Activated CD4-positive, alpha-beta T cell treated with anti-CD3 and anti-CD28 coated beads, Interleukin-2, amount 10 ng/mL, durations not matched to agents 24 days and 14 days (primary cell): ENCODE measurements at regions of chrX and their contacts with region 1.

Region 1: GRCh38 chrX:12955882-12956703 is 18.8 kb upstream of the TMSB4X start:
- DNase-seq: peak; percentile 90
- H3K4me3 Mint-ChIP-seq: peak overlapping the region; percentile 90
- H3K27ac Mint-ChIP-seq: peak overlapping the region; percentile 98
- H3K4me1 Mint-ChIP-seq: peaks cover 51% of the 10 kb centered on the region
- H3K27me3 Mint-ChIP-seq: no peaks in the 10 kb centered on the region

Region 2: GRCh38 chrX:12966151-12966550 is 10.1 kb after region 1 on chrX:
- intact Hi-C with region 1: loop called (anchors 1 kb)
- DNase-seq: no peak
- H3K4me3 Mint-ChIP-seq: peak overlapping the region; percentile 44
- H3K27ac Mint-ChIP-seq: peak overlapping the region; percentile 97
- H3K4me1 Mint-ChIP-seq: peaks cover 46% of the 10 kb centered on the region
- H3K27me3 Mint-ChIP-seq: no peaks in the 10 kb centered on the region

Region 3: GRCh38 chrX:12974796-12975669 is 18.9 kb after region 1 on chrX and contains the start of gene TMSB4X:
- intact Hi-C with region 1: loop called (anchors 1 kb)
- DNase-seq: peak; percentile 96
- H3K4me3 Mint-ChIP-seq: peak within 1 kb of the TSS; percentile 97
- H3K27ac Mint-ChIP-seq: peak within 1 kb of the TSS; percentile 98
- H3K4me1 Mint-ChIP-seq: peaks cover 32% of the 10 kb centered on the region
- H3K27me3 Mint-ChIP-seq: no peaks in the 10 kb centered on the region
- total RNA-seq, gene TMSB4X: 5,263 and 5,311 TPM in 2 replicates

Region 4: GRCh38 chrX:13029341-13029740 is 73.2 kb after region 1 on chrX:
- intact Hi-C with region 1: no loop called
- DNase-seq: peak; percentile 61
- H3K4me3 Mint-ChIP-seq: peak overlapping the region; percentile 35
- H3K27ac Mint-ChIP-seq: peak overlapping the region; percentile 84
- H3K4me1 Mint-ChIP-seq: peaks cover 45% of the 10 kb centered on the region
- H3K27me3 Mint-ChIP-seq: no peaks in the 10 kb centered on the region